Lower leg skin (tissue), 4 donors: ENCODE measurements at regions of chrX and their contacts with region 1.

Region 1: GRCh38 chrX:40006106-40007017 is 91.4 kb downstream of the BCOR start:
- DNase-seq: peak in 1 of 2 donors; percentile 87
- H3K4me3 ChIP-seq: no peak overlapping the region
- CTCF ChIP-seq: no peak
- POLR2A ChIP-seq: no peak

Region 2: GRCh38 chrX:40108959-40109287 is 102.6 kb after region 1 on chrX:
- intact Hi-C with region 1: loop called (anchors 10 kb)
- DNase-seq: peak; percentile 55 to 95
- H3K4me3 ChIP-seq: peak overlapping the region; percentile 52
- CTCF ChIP-seq: no peak
- POLR2A ChIP-seq: no peak